ENCODE measurements at regions of chr12 and their contacts with region 1.

Region 1: DNA sequence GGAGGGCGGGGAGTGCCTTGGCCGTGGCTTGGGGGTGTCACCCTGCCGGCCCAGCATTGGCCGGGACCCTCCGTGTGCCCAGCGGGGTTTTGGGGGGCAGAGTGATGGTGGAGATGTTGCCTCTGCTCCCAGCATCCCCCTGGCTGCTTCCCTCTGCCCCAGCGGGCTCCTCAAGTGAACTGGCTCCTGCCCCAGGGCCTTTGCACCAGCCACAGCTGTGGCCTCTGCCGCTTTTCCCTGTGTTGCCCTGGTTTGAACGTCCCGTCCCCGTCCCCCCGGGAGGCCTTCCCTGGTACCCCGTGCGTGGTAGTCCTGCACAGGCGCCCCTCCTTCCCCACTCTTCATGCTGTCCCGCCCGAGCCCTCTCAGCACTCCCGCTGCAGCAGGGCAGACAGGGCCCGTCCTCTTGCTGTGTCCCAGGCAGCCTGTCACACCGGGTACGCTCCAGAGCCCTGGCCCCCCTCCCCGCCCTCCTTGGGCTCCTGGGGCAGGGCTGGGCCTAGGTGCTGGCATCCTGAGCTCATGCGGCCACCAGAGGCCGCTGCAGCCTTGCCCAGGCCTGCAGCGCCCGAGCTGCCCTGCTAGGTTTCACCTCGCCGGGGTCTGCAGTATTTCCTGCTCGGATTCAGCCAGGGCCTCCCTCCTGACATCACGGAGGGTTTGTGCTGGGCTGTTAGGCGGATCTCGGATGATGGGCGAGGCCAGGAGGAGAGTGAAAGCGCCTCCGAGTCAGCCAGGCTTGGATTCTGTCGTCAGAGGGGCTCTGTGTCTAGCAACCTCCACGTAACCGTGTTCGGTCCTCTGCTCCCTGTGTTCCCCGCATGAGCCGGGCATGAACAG is 9.5 kb downstream of the NOC4L start:
- DNase-seq: peak; percentile 74 to 78 (median 75)
- H3K4me3 ChIP-seq: peak overlapping the region; percentile 23 to 30
- H3K4me3 Mint-ChIP-seq: peak overlapping the region in 3 of 8 donors; percentile 8 to 48 (median 39)
- H3K27ac ChIP-seq: no peak overlapping the region
- H3K27ac Mint-ChIP-seq: peak overlapping the region in 2 of 7 donors; percentile 15 to 64
- H3K4me1 ChIP-seq: peaks cover 10% of the 10 kb centered on the region
- H3K4me1 Mint-ChIP-seq: peaks cover 0 to 5% (median 0%) of the 10 kb centered on the region in 4 donors
- H3K27me3 ChIP-seq: no peaks in the 10 kb centered on the region
- H3K27me3 Mint-ChIP-seq: no peaks in the 10 kb centered on the region

Region 2: GRCh38 chr12:132218915-132219314 is 65.2 kb after region 1 on chr12:
- CTCF ChIA-PET with region 1: interaction called, 25 read pairs
- POLR2A ChIA-PET with region 1: interaction called, 3 read pairs
- intact Hi-C with region 1: loop called (anchors 1 kb)
- DNase-seq: peak; percentile 47 to 57 (median 53)
- H3K4me3 ChIP-seq: no peak overlapping the region
- H3K4me3 Mint-ChIP-seq: no peak overlapping the region
- H3K27ac ChIP-seq: no peak overlapping the region
- H3K27ac Mint-ChIP-seq: peak overlapping the region in 1 of 7 donors; percentile 35
- H3K4me1 ChIP-seq: peaks cover 14% of the 10 kb centered on the region
- H3K4me1 Mint-ChIP-seq: peaks cover 7 to 16% (median 12%) of the 10 kb centered on the region in 4 donors
- H3K27me3 ChIP-seq: no peaks in the 10 kb centered on the region
- H3K27me3 Mint-ChIP-seq: peaks cover 5 to 9% of the 10 kb centered on the region in 2 donors

Region 3: GRCh38 chr12:132449565-132450417 is 296.1 kb after region 1 on chr12:
- CTCF ChIA-PET with region 1: no interaction called
- POLR2A ChIA-PET with region 1: no interaction called
- intact Hi-C with region 1: no loop called
- DNase-seq: peak in 2 of 5 donors; percentile 22 to 32
- H3K4me3 ChIP-seq: no peak overlapping the region
- H3K4me3 Mint-ChIP-seq: peak overlapping the region in 3 of 8 donors; percentile 29 to 43 (median 43)
- H3K27ac ChIP-seq: no peak overlapping the region
- H3K27ac Mint-ChIP-seq: peak overlapping the region in 4 of 7 donors; percentile 1 to 62 (median 38)
- H3K4me1 ChIP-seq: peaks cover 25% of the 10 kb centered on the region
- H3K4me1 Mint-ChIP-seq: peaks cover 16 to 28% (median 23%) of the 10 kb centered on the region in 4 donors
- H3K27me3 ChIP-seq: no peaks in the 10 kb centered on the region
- H3K27me3 Mint-ChIP-seq: peaks cover 2% of the 10 kb centered on the region in 2 donors

Region 4: DNA sequence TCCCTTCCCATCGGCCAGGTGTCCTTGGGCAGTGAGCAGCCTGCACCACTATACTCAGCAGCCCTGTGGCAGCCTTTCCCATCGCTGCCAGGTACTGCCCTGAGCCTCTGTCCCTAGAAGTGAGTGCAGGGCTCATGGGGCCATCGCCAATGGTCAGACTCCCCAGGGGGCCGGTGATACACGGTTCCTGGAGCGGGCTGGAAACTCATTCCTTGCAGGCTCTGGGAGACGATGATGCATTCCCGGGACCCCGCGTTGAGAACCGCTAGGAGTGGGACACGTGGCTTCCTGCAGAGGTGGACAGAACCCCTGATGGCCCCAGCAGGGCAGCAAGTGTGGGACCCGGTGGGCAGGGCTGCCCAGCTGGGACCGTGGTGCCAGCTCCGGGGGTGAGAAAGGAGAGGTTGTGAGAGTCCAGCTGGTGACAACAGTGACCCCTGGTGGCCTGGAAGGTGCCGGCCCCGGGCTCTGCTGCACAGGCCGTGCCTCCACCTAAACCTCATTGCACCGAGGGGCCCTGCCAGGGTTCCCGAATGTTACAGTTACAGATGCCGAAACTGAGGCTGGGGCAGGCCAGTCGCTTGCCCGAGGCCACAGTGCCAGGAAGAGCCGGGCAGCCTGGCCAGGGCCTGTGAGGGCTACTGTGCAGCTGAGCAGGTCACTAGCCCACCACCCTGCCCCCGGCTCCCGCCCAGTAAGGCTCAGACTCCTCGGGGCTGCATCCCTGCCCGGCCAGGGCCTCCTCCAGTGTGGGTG is 370.0 kb after region 1 on chr12:
- CTCF ChIA-PET with region 1: interaction called, 8 read pairs
- POLR2A ChIA-PET with region 1: no interaction called
- intact Hi-C with region 1: loop called (anchors 1 kb)
- DNase-seq: peak; percentile 59 to 69 (median 63)
- H3K4me3 ChIP-seq: no peak overlapping the region
- H3K4me3 Mint-ChIP-seq: no peak overlapping the region
- H3K27ac ChIP-seq: no peak overlapping the region
- H3K27ac Mint-ChIP-seq: peak overlapping the region in 2 of 7 donors; percentile 55 to 68
- H3K4me1 ChIP-seq: peaks cover 8% of the 10 kb centered on the region
- H3K4me1 Mint-ChIP-seq: peaks cover 9 to 21% (median 12%) of the 10 kb centered on the region in 4 donors
- H3K27me3 ChIP-seq: no peaks in the 10 kb centered on the region
- H3K27me3 Mint-ChIP-seq: no peaks in the 10 kb centered on the region

Region 5: GRCh38 chr12:132614861-132615578 is 461.3 kb after region 1 on chr12:
- CTCF ChIA-PET with region 1: interaction called, 5 read pairs
- POLR2A ChIA-PET with region 1: no interaction called
- intact Hi-C with region 1: loop called (anchors 1 kb)
- DNase-seq: peak; percentile 71 to 76 (median 75)
- H3K4me3 ChIP-seq: no peak overlapping the region
- H3K4me3 Mint-ChIP-seq: peak overlapping the region in 1 of 8 donors; percentile 35
- H3K27ac ChIP-seq: no peak overlapping the region
- H3K27ac Mint-ChIP-seq: peak overlapping the region in 1 of 7 donors; percentile 4
- H3K4me1 ChIP-seq: no peaks in the 10 kb centered on the region
- H3K4me1 Mint-ChIP-seq: peaks cover 7 to 24% (median 13%) of the 10 kb centered on the region in 4 donors
- H3K27me3 ChIP-seq: peaks cover 23% of the 10 kb centered on the region
- H3K27me3 Mint-ChIP-seq: peaks cover 27% of the 10 kb centered on the region in 2 donors